ENCODE measurements at regions of chr1 and their contacts with region 1.

Region 1: GRCh38 chr1:51296383-51297357 is 33.7 kb downstream of the TTC39A start:
- DNase-seq: peak in 1 of 2 donors; percentile 91
- H3K4me3 ChIP-seq: peak overlapping the region; percentile 57 to 71
- H3K27ac ChIP-seq: peak overlapping the region; percentile 14 to 43
- H3K4me1 ChIP-seq: peaks cover 0 to 5% of the 10 kb centered on the region in 2 donors
- H3K27me3 ChIP-seq: no peaks in the 10 kb centered on the region
- CTCF ChIP-seq: peak; percentile 89 to 99 (median 99)

Region 2: DNA sequence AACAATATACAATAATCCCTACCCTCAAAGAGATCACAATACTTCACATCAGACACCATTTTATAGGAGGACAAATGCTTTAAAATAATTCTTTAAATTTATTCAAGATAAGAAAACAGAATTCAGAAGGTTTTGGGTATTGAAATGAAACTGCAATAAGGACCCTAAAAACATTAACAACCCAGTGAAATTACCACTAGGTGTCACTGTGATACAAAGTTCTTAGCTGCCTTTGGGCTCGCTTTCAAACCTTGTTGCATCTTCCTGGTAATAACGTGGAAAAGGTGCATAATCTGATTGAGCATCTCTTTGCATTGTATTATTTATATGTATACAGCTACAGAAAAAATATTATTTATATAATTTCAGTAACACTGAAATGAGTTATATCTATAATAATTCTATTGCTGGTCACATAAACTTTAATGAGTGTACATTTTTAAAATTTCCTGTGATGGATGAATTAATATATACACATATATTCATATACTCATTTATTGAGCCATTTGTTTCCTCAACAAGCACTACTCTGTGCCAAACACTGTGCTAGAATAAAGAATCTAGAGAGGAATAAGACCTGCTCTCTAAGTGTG is 521.8 kb before region 1 on chr1:
- intact Hi-C with region 1: loop called (anchors 2 kb)
- DNase-seq: no peak
- H3K4me3 ChIP-seq: no peak overlapping the region
- H3K27ac ChIP-seq: no peak overlapping the region
- H3K4me1 ChIP-seq: no peaks in the 10 kb centered on the region
- H3K27me3 ChIP-seq: no peaks in the 10 kb centered on the region
- CTCF ChIP-seq: peak in 2 of 3 experiments; percentile 58 to 73

Region 3: GRCh38 chr1:50959913-50960844 is 336.5 kb before region 1 on chr1 and contains the start of gene FAF1:
- intact Hi-C with region 1: loop called (anchors 10 kb)
- DNase-seq: peak; percentile 83 to 98
- H3K4me3 ChIP-seq: peak within 1 kb of the TSS; percentile 92 to 94
- H3K27ac ChIP-seq: peak within 1 kb of the TSS; percentile 77 to 79
- H3K4me1 ChIP-seq: peaks cover 0 to 11% of the 10 kb centered on the region in 2 donors
- H3K27me3 ChIP-seq: no peaks in the 10 kb centered on the region
- CTCF ChIP-seq: peak in 1 of 3 experiments; percentile 25
- total RNA-seq, gene FAF1: 16.4 TPM

Region 4: DNA sequence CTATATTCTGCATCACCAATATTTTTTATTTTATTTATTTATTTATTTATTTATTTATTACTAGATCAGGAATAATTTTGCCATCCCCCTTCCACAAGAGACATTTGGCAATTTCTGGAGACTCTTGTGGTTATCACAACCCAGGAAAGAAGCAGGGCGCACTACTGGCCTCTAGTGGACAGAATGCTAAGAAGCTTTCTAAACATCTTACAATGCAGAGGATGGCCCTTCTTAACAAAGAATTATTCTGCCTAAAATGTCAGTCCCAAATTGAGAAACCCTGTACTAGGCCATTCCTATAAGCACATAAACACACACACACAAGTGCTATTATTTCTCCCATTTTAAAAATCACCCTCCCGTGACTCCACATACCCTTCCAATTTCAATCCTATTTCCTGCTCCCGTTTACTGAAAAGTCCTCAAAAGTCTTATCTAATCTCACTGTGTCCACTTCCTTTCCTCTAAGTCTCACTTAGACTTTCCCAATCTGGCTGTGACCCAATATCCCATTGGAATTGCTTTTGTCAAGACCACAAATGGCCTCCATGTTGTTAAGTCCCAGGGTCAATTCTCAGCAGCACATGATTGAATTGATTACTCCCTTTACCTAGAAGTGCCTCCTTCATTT is 104.3 kb before region 1 on chr1:
- intact Hi-C with region 1: loop called (anchors 2 kb)
- DNase-seq: peak in 1 of 2 donors; percentile 80
- H3K4me3 ChIP-seq: no peak overlapping the region
- H3K27ac ChIP-seq: no peak overlapping the region
- H3K4me1 ChIP-seq: no peaks in the 10 kb centered on the region
- H3K27me3 ChIP-seq: no peaks in the 10 kb centered on the region
- CTCF ChIP-seq: peak; percentile 40 to 89 (median 85)

Region 5: GRCh38 chr1:52268372-52268771 is 971.7 kb after region 1 on chr1:
- intact Hi-C with region 1: no loop called
- DNase-seq: no peak
- H3K4me3 ChIP-seq: no peak overlapping the region
- H3K27ac ChIP-seq: no peak overlapping the region
- H3K4me1 ChIP-seq: no peaks in the 10 kb centered on the region
- H3K27me3 ChIP-seq: no peaks in the 10 kb centered on the region
- CTCF ChIP-seq: no peak

Measured in ascending aorta (tissue), 2 donors.